ENCODE measurements at regions of chr7 and their contacts with region 1.

Region 1: DNA sequence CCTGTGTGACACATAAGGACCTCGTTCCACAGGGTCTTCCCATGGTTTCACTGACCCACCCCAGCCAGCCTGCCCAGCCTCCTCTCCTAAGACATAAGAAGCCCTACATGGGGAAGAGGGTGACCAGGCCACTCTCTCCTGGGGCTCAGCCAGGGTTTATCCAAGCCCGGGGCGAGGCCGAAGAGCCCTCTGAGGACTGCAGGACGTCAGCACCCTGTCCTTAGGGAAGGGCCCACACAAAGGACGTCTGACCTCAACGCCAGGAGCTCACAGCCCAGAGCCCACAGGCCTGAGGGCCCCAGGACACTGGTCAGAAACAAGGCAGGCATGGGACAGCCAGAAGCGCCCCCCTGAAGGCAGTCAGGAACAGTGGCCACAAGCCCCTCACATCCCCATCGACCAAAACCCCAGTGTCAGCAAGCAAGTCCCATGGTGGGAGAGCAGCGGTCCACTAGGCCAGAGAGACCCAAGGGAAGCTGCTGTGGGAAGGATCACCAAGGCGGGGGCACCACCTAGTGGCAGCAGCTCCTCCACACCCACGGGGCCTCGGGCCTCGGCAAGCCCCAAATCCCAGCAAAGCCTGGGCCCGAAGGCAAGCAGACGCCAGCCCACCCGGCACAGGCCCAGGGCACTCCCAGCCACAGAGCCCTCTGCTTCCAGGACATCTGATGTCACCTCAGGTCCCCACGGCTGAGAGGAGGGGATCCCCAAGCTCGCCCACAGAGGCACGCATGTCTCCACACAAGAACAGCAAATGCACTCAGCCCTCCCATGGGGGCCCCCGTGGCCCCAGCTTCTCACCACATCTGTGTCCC is 23.4 kb downstream of the MAD1L1 start:
- DNase-seq: peak; percentile 86
- CTCF ChIP-seq: peak; percentile 87

Region 2: DNA sequence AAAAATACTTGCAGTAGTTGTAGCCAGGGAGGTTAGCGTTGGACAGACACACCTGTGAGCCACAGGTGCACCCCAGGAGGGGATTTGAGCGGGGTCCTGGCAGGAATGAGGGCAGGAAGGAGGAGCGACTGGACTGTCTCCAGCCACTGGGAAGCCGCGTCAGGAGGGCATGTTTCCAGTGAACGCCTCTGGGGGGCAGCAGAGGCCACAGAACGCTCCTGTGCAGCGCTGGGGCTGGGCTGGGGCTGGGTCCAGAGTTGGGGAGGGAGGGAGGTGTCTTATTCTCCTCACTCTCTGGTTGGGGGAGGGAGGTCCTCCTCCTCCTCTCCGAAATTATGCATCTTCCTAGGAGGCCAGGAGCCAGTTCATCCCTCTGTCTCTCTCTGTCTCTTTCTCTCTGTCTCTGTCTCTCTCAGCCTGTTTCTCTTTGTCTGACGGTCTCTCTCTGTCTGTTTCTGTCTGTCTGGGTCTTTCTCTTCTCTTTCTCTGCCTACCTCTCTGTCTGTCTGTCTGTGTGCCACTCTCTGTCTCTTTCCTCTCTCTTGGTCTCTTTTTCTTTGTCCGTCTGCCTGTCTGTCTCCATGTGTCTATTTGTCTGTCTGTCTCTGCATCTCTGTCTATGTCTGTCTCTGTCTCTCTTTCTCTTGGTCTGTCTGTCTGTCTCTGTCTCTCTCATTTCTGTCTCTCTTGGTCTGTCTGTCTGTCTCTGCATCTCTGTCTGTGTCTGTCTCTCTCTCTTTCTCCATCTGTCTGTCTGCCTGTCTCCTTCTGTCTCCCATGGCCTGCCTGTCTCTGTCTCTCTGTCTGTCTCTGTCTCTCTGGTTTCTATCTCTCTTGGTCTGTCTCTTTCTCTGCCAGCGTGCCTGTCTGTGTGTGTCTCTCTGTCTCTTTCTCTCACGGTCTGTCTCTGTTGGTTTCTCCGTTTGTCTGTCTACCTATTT is 629.6 kb before region 1 on chr7:
- in situ Hi-C with region 1: loop called (anchors 25 kb)
- DNase-seq: peak; percentile 85
- CTCF ChIP-seq: peak; percentile 96

Region 3: GRCh38 chr7:2444476-2444875 is 235.1 kb after region 1 on chr7:
- in situ Hi-C with region 1: no loop called
- DNase-seq: no peak
- CTCF ChIP-seq: no peak

Measured in GM13977 (cell line).